T-cell (primary cell): ENCODE measurements at regions of chr20 and their contacts with region 1.

Region 1: DNA sequence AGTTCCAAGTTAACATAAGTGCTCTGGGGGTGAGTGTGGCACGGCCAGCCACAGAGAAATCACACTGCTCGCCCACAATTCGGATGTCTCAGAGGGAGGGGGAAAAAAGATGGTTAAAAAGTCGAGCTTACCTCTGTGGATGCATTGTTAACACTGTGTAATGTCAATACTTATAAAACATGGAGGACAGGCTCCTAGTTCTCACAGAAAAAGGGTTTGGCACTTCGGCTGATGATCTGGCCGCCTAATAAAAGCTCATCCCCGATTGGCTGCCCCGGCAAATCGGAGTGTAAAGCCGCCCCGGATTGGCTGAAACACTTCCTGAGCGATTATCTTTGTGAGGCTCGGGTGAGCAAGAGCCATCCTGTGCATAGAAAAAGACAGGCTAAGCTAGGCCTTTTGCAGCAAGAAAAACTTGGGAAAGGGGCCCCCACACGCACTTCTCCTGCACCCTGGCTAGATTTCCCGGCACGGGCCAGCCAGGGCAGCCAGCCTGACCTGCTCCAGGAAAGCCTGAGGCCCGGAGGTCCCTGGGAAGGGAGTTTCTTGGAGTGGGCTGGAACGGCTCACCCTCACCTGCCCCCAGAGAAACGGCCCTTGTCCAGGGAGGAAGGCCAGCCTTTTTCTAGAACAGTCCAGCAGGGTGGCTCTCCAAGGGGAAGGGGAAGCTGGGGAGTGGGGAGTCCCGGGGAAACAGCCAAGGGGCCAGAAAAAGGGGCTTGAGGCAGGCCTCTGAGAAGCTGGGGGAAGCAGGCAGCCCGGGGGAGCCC is at the start of gene ZMYND8:
- DNase-seq: peak; percentile 79 to 100 (median 93)
- ATAC-seq: peak; percentile 85 to 90 (median 86)
- H3K4me3 ChIP-seq: peak within 1 kb of the TSS; percentile 50 to 71
- H3K4me3 Mint-ChIP-seq: peak within 1 kb of the TSS in 2 of 3 donors; percentile 87 to 88
- H3K27ac ChIP-seq: peak within 1 kb of the TSS; percentile 92
- H3K27ac Mint-ChIP-seq: peak within 1 kb of the TSS in 1 of 2 donors; percentile 99
- H3K4me1 ChIP-seq: peaks cover 56 to 77% of the 10 kb centered on the region in 2 experiments
- H3K4me1 Mint-ChIP-seq: peaks cover 39 to 61% (median 50%) of the 10 kb centered on the region in 3 donors
- H3K27me3 ChIP-seq: no peaks in the 10 kb centered on the region
- H3K27me3 Mint-ChIP-seq: no peaks in the 10 kb centered on the region
- total RNA-seq, gene ZMYND8: 39.6 to 68.9 (median 43.6) TPM

Region 2: DNA sequence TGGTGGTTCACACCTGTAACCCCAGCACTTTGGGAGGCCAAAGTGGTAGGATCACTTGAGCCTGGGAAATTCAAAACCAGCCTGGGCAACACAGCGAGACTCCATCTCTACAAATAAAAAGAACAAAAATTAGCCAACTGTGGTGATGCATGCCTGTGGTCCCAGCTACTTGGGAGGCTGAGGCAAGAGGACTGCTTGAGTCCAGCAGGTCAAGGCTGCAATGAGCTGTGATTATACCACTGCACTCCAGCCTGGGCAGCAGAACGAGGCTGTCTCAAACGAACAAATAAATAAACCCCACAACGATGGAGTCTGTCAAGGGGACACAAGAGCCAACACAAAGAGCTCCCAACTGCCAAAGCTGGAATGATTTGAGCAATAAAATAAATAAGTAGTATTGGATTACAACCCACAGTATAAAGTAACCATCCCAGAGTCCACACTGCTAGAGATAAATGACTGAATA is 13.7 kb before region 1 on chr20:
- CTCF ChIA-PET with region 1: interaction called, 4 to 7 read pairs
- POLR2A ChIA-PET with region 1: interaction called in 1 of 2 experiments, 16 read pairs
- DNase-seq: no peak
- ATAC-seq: no peak
- H3K4me3 ChIP-seq: no peak overlapping the region
- H3K4me3 Mint-ChIP-seq: no peak overlapping the region
- H3K27ac ChIP-seq: no peak overlapping the region
- H3K27ac Mint-ChIP-seq: peak overlapping the region in 1 of 2 donors; percentile 48
- H3K4me1 ChIP-seq: peaks cover 5 to 46% of the 10 kb centered on the region in 2 experiments
- H3K4me1 Mint-ChIP-seq: peaks cover 33 to 56% (median 34%) of the 10 kb centered on the region in 3 donors
- H3K27me3 ChIP-seq: no peaks in the 10 kb centered on the region
- H3K27me3 Mint-ChIP-seq: no peaks in the 10 kb centered on the region

Region 3: DNA sequence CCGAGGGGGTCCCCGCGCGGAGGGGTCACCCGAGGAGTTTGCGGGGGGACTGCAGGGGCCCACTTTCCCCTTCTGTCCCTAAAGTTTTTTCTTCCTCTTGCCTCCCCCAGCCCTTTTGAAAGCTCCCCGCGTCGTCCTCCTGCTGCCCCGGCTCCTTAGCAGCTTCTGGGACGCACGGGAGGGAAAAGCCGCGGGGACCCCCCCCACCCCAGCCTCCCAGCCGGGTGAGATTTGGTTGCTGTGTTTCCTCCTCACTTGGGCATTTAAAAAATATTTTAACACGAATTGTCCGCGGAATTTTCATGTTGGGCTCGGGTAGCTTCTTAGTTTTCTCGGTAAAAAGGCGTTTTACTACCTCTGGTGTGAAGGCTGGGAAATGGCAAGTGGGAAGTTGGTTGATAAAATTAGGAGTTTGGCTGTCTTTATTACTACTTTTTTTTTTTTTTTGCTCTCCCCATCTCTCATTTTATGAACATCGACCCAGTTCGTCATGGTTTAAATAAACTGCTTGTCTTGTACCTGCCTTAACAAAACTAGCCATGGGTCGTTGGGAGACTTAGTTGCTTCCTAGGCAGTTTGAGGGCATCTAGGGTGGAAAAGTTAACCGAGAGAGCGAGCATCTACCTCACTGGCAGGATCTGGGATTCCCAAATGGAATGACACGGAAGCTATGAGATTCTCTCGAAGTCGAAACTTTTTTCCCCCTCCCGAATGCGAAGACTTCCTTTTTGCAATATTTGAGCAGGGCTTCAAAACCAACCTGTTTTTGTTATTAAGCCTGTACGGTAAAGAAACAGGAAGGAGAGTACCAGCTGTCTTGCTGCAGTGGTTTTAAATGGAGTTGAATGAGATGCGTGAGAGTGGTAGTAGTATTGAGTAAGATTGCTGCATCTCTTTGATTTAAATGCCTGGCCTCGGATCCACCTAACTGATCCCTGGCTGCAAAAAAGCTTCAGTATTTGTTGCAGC is 145.8 kb after region 1 on chr20:
- CTCF ChIA-PET with region 1: interaction called in 1 of 2 experiments, 4 read pairs
- POLR2A ChIA-PET with region 1: interaction called in 1 of 2 experiments, 11 read pairs
- DNase-seq: peak in 26 of 35 experiments; percentile 5 to 70 (median 24)
- ATAC-seq: peak; percentile 59 to 69 (median 64)
- H3K4me3 ChIP-seq: peak overlapping the region; percentile 85
- H3K4me3 Mint-ChIP-seq: peak overlapping the region; percentile 98 to 99 (median 99)
- H3K27ac ChIP-seq: peak overlapping the region; percentile 71
- H3K27ac Mint-ChIP-seq: peak overlapping the region; percentile 93
- H3K4me1 ChIP-seq: peaks cover 23 to 31% of the 10 kb centered on the region in 2 experiments
- H3K4me1 Mint-ChIP-seq: peaks cover 53 to 55% (median 53%) of the 10 kb centered on the region in 3 donors
- H3K27me3 ChIP-seq: no peaks in the 10 kb centered on the region
- H3K27me3 Mint-ChIP-seq: no peaks in the 10 kb centered on the region